Psoas muscle (tissue), 8 donors: ENCODE measurements at regions of chr6 and their contacts with region 1.

Region 1: GRCh38 chr6:46848684-46849360 is 55.6 kb downstream of the MEP1A start:
- DNase-seq: peak; percentile 87 to 89
- ATAC-seq: peak; percentile 92 to 99 (median 96)
- H3K4me3 ChIP-seq: peak overlapping the region; percentile 15
- H3K27ac ChIP-seq: no peak overlapping the region
- H3K4me1 ChIP-seq: no peaks in the 10 kb centered on the region
- H3K27me3 ChIP-seq: no peaks in the 10 kb centered on the region
- CTCF ChIP-seq: peak; percentile 98

Region 2: GRCh38 chr6:47047479-47048407 is 198.9 kb after region 1 on chr6:
- intact Hi-C with region 1: loop called (anchors 1 to 2 kb)
- DNase-seq: no peak
- ATAC-seq: peak; percentile 81 to 90 (median 86)
- H3K4me3 ChIP-seq: no peak overlapping the region
- H3K27ac ChIP-seq: no peak overlapping the region
- H3K4me1 ChIP-seq: peaks cover 3% of the 10 kb centered on the region
- H3K27me3 ChIP-seq: no peaks in the 10 kb centered on the region
- CTCF ChIP-seq: peak; percentile 77

Region 3: GRCh38 chr6:47247227-47247797 is 398.5 kb after region 1 on chr6:
- intact Hi-C with region 1: no loop called
- DNase-seq: no peak
- ATAC-seq: peak; percentile 38 to 78 (median 58)
- H3K4me3 ChIP-seq: no peak overlapping the region
- H3K27ac ChIP-seq: no peak overlapping the region
- H3K4me1 ChIP-seq: no peaks in the 10 kb centered on the region
- H3K27me3 ChIP-seq: no peaks in the 10 kb centered on the region
- CTCF ChIP-seq: no peak

Region 4: DNA sequence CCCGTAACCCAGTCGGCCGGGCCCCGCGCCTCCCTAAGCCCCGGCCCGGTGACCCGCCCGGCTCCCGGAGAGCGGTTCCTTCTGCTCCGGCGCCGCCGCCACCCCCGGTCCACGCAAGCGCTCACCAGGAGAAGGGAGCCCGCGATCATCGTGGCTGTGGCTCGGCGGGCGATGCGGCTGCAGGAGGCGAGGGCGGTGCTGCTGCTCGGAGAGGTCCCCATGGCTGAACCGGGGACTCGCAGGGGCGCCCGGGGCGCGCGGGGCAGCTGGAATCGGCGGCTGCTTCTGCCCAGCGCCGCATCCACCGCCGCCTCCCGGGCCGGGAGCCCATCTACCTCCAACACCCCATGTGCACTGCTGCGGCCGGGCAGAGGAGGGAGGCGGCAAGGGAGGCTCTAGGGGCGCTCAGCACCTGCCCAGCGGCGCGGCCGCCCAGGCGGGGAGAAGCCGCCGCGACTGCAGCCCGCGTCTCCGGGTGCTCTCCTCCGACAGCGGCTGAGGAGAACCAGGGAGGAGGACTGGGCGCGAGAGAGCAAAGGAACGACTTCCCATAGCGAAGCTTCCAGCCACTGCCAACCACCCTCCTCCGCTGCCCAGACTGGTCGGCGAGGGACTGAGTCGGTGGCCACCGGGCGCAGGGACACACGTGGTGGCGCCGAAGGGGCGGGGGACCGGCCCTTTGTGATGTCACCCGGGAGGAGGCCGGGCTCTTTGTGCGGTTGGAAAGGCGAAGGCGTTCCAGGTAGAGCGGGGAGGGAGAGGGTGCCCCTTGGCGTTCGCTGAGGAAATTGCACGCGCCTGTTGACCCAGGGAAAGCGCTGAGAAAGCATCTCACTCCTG is 460.7 kb after region 1 on chr6 and contains the start of gene TNFRSF21:
- intact Hi-C with region 1: loop called (anchors 5 to 10 kb)
- DNase-seq: peak; percentile 89 to 95
- ATAC-seq: peak; percentile 98 to 100 (median 99)
- H3K4me3 ChIP-seq: peak within 1 kb of the TSS; percentile 86
- H3K27ac ChIP-seq: peak within 1 kb of the TSS; percentile 59
- H3K4me1 ChIP-seq: peaks cover 3% of the 10 kb centered on the region
- H3K27me3 ChIP-seq: peaks cover 0 to 35% (median 0%) of the 10 kb centered on the region in 3 donors
- CTCF ChIP-seq: peak; percentile 95
- total RNA-seq, gene TNFRSF21: 4.3 to 22.3 (median 8.9) TPM